Natural killer cell (primary cell): ENCODE measurements at regions of chrX and their contacts with region 1.

Region 1: DNA sequence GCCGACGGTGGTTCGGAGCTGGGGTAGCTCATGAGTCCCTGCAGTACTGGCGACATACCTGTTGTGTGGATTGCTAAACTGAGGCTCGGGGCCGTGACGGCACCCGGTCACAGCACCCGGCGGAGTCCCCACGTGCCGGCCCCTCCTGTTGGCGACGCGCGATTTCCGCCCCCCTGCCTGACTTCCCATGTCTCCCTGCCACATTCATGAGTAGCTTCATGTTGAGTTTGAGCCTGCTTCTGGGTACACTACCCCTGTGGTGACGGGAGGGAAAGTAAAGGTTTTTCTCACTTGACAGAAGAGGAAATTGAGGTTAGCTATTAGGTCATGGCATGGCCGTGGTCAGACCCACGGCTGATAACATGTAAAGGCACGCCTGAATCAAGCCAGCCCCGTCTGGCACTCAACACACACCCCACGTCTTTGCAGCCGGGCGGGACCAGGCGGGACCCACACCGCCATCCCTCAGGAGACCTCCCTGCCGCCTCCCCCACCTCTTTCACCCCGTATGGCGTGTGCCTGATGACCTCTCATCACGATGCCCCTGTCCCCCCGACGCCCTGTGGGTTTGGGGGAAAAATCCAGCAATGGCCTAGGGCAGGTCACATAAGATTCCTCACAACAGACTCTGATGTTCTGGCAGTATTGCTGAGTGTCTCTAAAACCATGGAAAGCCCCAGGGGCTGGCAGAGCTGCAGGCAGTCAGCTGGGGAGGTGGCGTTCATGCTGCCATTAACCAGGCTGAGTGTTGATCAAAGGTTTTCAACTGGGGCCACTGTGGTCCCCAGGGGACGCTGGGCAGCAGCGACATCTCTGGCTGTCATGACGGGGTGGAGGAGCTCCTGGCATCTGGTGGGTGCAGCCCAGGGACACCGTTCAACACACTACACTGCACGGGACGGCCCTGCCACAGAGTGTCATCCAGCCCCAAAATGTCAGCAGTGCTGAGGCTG is 29.2 kb downstream of the P2RY8 start:
- DNase-seq: peak; percentile 71 to 86
- ATAC-seq: peak; percentile 81 to 90 (median 88)
- H3K4me3 ChIP-seq: no peak overlapping the region
- H3K4me3 Mint-ChIP-seq: peak overlapping the region; percentile 73
- H3K27ac ChIP-seq: peak overlapping the region; percentile 43
- H3K27ac Mint-ChIP-seq: no peak overlapping the region
- H3K4me1 ChIP-seq: peaks cover 53% of the 10 kb centered on the region
- H3K4me1 Mint-ChIP-seq: peaks cover 12 to 26% of the 10 kb centered on the region in 2 donors
- H3K27me3 ChIP-seq: no peaks in the 10 kb centered on the region
- H3K27me3 Mint-ChIP-seq: no peaks in the 10 kb centered on the region
- CTCF ChIP-seq: no peak

Region 2: GRCh38 chrX:1462596-1463251 is 45.1 kb before region 1 on chrX:
- intact Hi-C with region 1: loop called (anchors 1 kb)
- DNase-seq: peak; percentile 58 to 95
- ATAC-seq: peak; percentile 69 to 86 (median 82)
- H3K4me3 ChIP-seq: no peak overlapping the region
- H3K4me3 Mint-ChIP-seq: peak overlapping the region; percentile 92
- H3K27ac ChIP-seq: peak overlapping the region; percentile 83
- H3K27ac Mint-ChIP-seq: peak overlapping the region; percentile 90 to 91
- H3K4me1 ChIP-seq: peaks cover 65% of the 10 kb centered on the region
- H3K4me1 Mint-ChIP-seq: peaks cover 54 to 56% of the 10 kb centered on the region in 2 donors
- H3K27me3 ChIP-seq: no peaks in the 10 kb centered on the region
- H3K27me3 Mint-ChIP-seq: no peaks in the 10 kb centered on the region
- CTCF ChIP-seq: no peak

Region 3: GRCh38 chrX:1481636-1482529 is 25.9 kb before region 1 on chrX:
- intact Hi-C with region 1: loop called (anchors 1 kb)
- DNase-seq: peak; percentile 67 to 92
- ATAC-seq: peak; percentile 69 to 85 (median 83)
- H3K4me3 ChIP-seq: peak overlapping the region; percentile 7
- H3K4me3 Mint-ChIP-seq: peak overlapping the region; percentile 92
- H3K27ac ChIP-seq: peak overlapping the region; percentile 95
- H3K27ac Mint-ChIP-seq: peak overlapping the region; percentile 98 to 99
- H3K4me1 ChIP-seq: peaks cover 80% of the 10 kb centered on the region
- H3K4me1 Mint-ChIP-seq: peaks cover 68 to 72% of the 10 kb centered on the region in 2 donors
- H3K27me3 ChIP-seq: no peaks in the 10 kb centered on the region
- H3K27me3 Mint-ChIP-seq: no peaks in the 10 kb centered on the region
- CTCF ChIP-seq: no peak

Region 4: GRCh38 chrX:1521459-1521956 is 13.7 kb after region 1 on chrX:
- intact Hi-C with region 1: loop called (anchors 2 kb)
- DNase-seq: peak; percentile 32 to 90
- ATAC-seq: peak; percentile 89 to 92 (median 91)
- H3K4me3 ChIP-seq: no peak overlapping the region
- H3K4me3 Mint-ChIP-seq: peak overlapping the region; percentile 53
- H3K27ac ChIP-seq: peak overlapping the region; percentile 82
- H3K27ac Mint-ChIP-seq: peak overlapping the region; percentile 78 to 91
- H3K4me1 ChIP-seq: peaks cover 38% of the 10 kb centered on the region
- H3K4me1 Mint-ChIP-seq: peaks cover 44 to 52% of the 10 kb centered on the region in 2 donors
- H3K27me3 ChIP-seq: no peaks in the 10 kb centered on the region
- H3K27me3 Mint-ChIP-seq: no peaks in the 10 kb centered on the region
- CTCF ChIP-seq: no peak